ENCODE measurements at regions of chr2 and their contacts with region 1.

Region 1: GRCh38 chr2:165536851-165537499 is 67.5 kb downstream of the CSRNP3 start:
- DNase-seq: no peak
- ATAC-seq: no peak
- H3K4me3 ChIP-seq: no peak overlapping the region
- H3K4me3 Mint-ChIP-seq: no peak overlapping the region
- H3K27ac ChIP-seq: no peak overlapping the region
- H3K27ac Mint-ChIP-seq: no peak overlapping the region
- H3K4me1 ChIP-seq: no peaks in the 10 kb centered on the region
- H3K4me1 Mint-ChIP-seq: no peaks in the 10 kb centered on the region
- H3K27me3 ChIP-seq: no peaks in the 10 kb centered on the region
- H3K27me3 Mint-ChIP-seq: peaks cover 0 to 4% of the 10 kb centered on the region in 2 donors

Region 2: GRCh38 chr2:165163761-165164160 is 373.2 kb before region 1 on chr2:
- CTCF ChIA-PET with region 1: no interaction called
- POLR2A ChIA-PET with region 1: no interaction called
- DNase-seq: no peak
- ATAC-seq: no peak
- H3K4me3 ChIP-seq: no peak overlapping the region
- H3K4me3 Mint-ChIP-seq: no peak overlapping the region
- H3K27ac ChIP-seq: no peak overlapping the region
- H3K27ac Mint-ChIP-seq: no peak overlapping the region
- H3K4me1 ChIP-seq: no peaks in the 10 kb centered on the region
- H3K4me1 Mint-ChIP-seq: no peaks in the 10 kb centered on the region
- H3K27me3 ChIP-seq: no peaks in the 10 kb centered on the region
- H3K27me3 Mint-ChIP-seq: no peaks in the 10 kb centered on the region

Region 3: DNA sequence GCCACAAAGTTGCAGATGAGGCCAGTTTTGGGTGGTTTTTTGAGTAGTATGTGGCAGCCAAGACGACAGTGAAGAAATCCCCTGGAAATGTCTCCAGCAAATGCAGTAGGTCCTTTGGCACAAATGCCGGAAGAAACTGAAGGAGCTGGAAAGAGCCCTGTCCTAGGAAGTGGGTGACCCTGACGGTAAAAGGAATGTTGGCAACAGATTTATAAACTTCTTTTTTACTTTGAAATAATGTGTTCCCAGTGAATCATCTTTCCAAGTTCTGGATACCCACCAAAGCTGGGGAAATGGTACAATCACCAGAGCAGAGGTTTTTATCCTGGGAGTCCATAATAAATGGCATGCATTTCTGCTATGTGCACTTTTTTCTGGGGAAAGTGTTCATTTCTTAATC is 45.4 kb after region 1 on chr2:
- CTCF ChIA-PET with region 1: no interaction called
- POLR2A ChIA-PET with region 1: interaction called in 1 of 2 experiments, 10 read pairs
- DNase-seq: no peak
- ATAC-seq: no peak
- H3K4me3 ChIP-seq: no peak overlapping the region
- H3K4me3 Mint-ChIP-seq: no peak overlapping the region
- H3K27ac ChIP-seq: no peak overlapping the region
- H3K27ac Mint-ChIP-seq: no peak overlapping the region
- H3K4me1 ChIP-seq: no peaks in the 10 kb centered on the region
- H3K4me1 Mint-ChIP-seq: no peaks in the 10 kb centered on the region
- H3K27me3 ChIP-seq: no peaks in the 10 kb centered on the region
- H3K27me3 Mint-ChIP-seq: peaks cover 0 to 2% of the 10 kb centered on the region in 2 donors

Region 4: GRCh38 chr2:165594935-165595255 is 57.9 kb after region 1 on chr2:
- CTCF ChIA-PET with region 1: no interaction called
- POLR2A ChIA-PET with region 1: no interaction called
- DNase-seq: no peak
- ATAC-seq: no peak
- H3K4me3 ChIP-seq: no peak overlapping the region
- H3K4me3 Mint-ChIP-seq: no peak overlapping the region
- H3K27ac ChIP-seq: no peak overlapping the region
- H3K27ac Mint-ChIP-seq: no peak overlapping the region
- H3K4me1 ChIP-seq: no peaks in the 10 kb centered on the region
- H3K4me1 Mint-ChIP-seq: peaks cover 0 to 2% (median 0%) of the 10 kb centered on the region in 3 donors
- H3K27me3 ChIP-seq: no peaks in the 10 kb centered on the region
- H3K27me3 Mint-ChIP-seq: peaks cover 0 to 4% of the 10 kb centered on the region in 2 donors

Region 5: GRCh38 chr2:166351319-166351718 is 814.3 kb after region 1 on chr2:
- CTCF ChIA-PET with region 1: no interaction called
- POLR2A ChIA-PET with region 1: no interaction called
- DNase-seq: no peak
- ATAC-seq: no peak
- H3K4me3 ChIP-seq: no peak overlapping the region
- H3K4me3 Mint-ChIP-seq: no peak overlapping the region
- H3K27ac ChIP-seq: no peak overlapping the region
- H3K27ac Mint-ChIP-seq: no peak overlapping the region
- H3K4me1 ChIP-seq: no peaks in the 10 kb centered on the region
- H3K4me1 Mint-ChIP-seq: no peaks in the 10 kb centered on the region
- H3K27me3 ChIP-seq: no peaks in the 10 kb centered on the region
- H3K27me3 Mint-ChIP-seq: no peaks in the 10 kb centered on the region